CD8-positive, alpha-beta T cell (primary cell): ENCODE measurements at regions of chr4 and their contacts with region 1.

Region 1: GRCh38 chr4:143513306-143514168 is at the start of gene SMARCA5:
- DNase-seq: peak; percentile 88 to 100 (median 93)
- ATAC-seq: peak; percentile 86
- H3K4me3 ChIP-seq: peak within 1 kb of the TSS; percentile 68 to 88
- H3K4me3 Mint-ChIP-seq: peak within 1 kb of the TSS; percentile 99
- H3K27ac ChIP-seq: peak within 1 kb of the TSS; percentile 96 to 99
- H3K27ac Mint-ChIP-seq: peak within 1 kb of the TSS; percentile 100
- H3K4me1 ChIP-seq: peaks cover 38% of the 10 kb centered on the region
- H3K4me1 Mint-ChIP-seq: peaks cover 42% of the 10 kb centered on the region
- H3K27me3 ChIP-seq: no peaks in the 10 kb centered on the region
- H3K27me3 Mint-ChIP-seq: no peaks in the 10 kb centered on the region
- CTCF ChIP-seq: no peak
- total RNA-seq, gene SMARCA5: 57.9 to 63.1 TPM

Region 2: DNA sequence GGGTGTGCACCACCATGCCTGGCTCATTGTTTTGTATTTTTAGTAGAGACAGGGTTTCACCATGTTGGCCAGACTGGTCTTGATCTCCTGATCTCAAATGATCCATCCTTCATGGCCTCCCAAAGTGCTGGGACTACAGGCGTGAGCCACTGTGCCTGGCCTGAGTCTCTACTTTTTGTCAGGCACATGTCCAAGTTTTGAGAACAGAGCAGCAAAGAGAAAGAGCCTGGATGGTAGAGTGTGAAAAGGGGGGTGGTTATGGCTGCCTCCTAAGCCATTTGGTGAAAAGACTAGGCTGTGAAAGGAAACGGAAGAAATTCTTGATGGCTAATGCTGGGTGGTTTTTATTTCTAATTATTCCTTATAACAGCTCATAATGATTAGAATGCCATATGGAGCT is 113.5 kb before region 1 on chr4:
- CTCF ChIA-PET with region 1: no interaction called
- POLR2A ChIA-PET with region 1: no interaction called
- intact Hi-C with region 1: loop called in 1 of 2 experiments (anchors 1 kb)
- DNase-seq: no peak
- ATAC-seq: no peak
- H3K4me3 ChIP-seq: no peak overlapping the region
- H3K4me3 Mint-ChIP-seq: no peak overlapping the region
- H3K27ac ChIP-seq: no peak overlapping the region
- H3K27ac Mint-ChIP-seq: no peak overlapping the region
- H3K4me1 ChIP-seq: no peaks in the 10 kb centered on the region
- H3K4me1 Mint-ChIP-seq: peaks cover 11% of the 10 kb centered on the region
- H3K27me3 ChIP-seq: no peaks in the 10 kb centered on the region
- H3K27me3 Mint-ChIP-seq: peaks cover 8% of the 10 kb centered on the region
- CTCF ChIP-seq: no peak

Region 3: GRCh38 chr4:143531380-143531779 is 17.8 kb after region 1 on chr4:
- CTCF ChIA-PET with region 1: no interaction called
- POLR2A ChIA-PET with region 1: interaction called, 5 read pairs
- intact Hi-C with region 1: loop called in 1 of 2 experiments (anchors 2 kb)
- DNase-seq: peak in 1 of 9 experiments; percentile 12
- ATAC-seq: no peak
- H3K4me3 ChIP-seq: no peak overlapping the region
- H3K4me3 Mint-ChIP-seq: no peak overlapping the region
- H3K27ac ChIP-seq: no peak overlapping the region
- H3K27ac Mint-ChIP-seq: no peak overlapping the region
- H3K4me1 ChIP-seq: no peaks in the 10 kb centered on the region
- H3K4me1 Mint-ChIP-seq: peaks cover 12% of the 10 kb centered on the region
- H3K27me3 ChIP-seq: no peaks in the 10 kb centered on the region
- H3K27me3 Mint-ChIP-seq: no peaks in the 10 kb centered on the region
- CTCF ChIP-seq: peak; percentile 15

Region 4: GRCh38 chr4:143587703-143588102 is 74.2 kb after region 1 on chr4:
- CTCF ChIA-PET with region 1: no interaction called
- POLR2A ChIA-PET with region 1: no interaction called
- intact Hi-C with region 1: no loop called
- DNase-seq: no peak
- ATAC-seq: no peak
- H3K4me3 ChIP-seq: no peak overlapping the region
- H3K4me3 Mint-ChIP-seq: no peak overlapping the region
- H3K27ac ChIP-seq: no peak overlapping the region
- H3K27ac Mint-ChIP-seq: no peak overlapping the region
- H3K4me1 ChIP-seq: no peaks in the 10 kb centered on the region
- H3K4me1 Mint-ChIP-seq: no peaks in the 10 kb centered on the region
- H3K27me3 ChIP-seq: no peaks in the 10 kb centered on the region
- H3K27me3 Mint-ChIP-seq: peaks cover 2% of the 10 kb centered on the region
- CTCF ChIP-seq: no peak

Region 5: DNA sequence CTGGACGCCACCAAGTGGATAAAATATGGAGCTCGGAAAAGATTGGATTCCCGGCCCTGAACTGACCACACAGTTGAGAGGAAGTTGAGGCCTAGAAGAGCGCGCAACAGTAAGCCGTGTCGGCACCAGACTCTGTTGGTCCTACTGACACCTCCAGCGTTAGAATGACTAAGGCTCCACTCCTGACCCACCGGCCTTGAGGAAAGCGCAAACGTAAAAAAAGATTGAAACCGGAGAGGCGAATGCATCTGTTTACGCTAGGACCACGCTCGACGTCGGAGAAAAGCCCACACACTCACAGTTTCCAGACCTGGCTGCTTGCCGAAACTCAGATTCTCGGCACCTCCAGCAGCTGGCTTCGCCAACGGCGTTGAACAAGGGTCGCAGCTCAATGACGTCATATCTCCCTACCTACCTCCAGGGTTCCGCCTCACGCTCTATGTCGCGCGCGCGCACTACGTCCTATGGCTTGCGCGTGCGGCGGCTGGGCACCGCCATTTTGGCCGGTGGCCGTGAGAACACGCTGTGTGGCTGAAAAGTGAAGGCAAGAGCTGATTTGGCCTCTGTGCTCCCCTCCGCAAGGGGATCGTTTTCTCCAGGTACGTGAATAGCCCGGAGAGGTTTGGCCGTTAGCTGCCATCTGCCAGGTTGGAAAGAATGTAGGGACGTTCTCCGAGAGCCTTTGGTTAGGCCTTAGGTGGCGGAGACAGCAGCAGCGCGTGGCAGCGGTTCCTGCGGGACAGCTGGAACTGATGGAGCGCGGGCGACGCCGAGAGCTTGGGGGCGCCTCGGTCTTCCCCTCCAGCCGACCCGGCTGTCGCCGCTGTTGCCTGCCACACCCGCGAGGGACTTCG is 1584.5 kb after region 1 on chr4 and contains the starts of genes ABCE1 and ANAPC10:
- CTCF ChIA-PET with region 1: no interaction called
- POLR2A ChIA-PET with region 1: interaction called, 5 read pairs
- intact Hi-C with region 1: loop called (anchors 1 to 5 kb)
- DNase-seq: peak; percentile 84 to 99 (median 97)
- ATAC-seq: peak; percentile 89
- H3K4me3 ChIP-seq: peak within 1 kb of the TSS; percentile 70 to 81
- H3K4me3 Mint-ChIP-seq: peak within 1 kb of the TSS; percentile 95
- H3K27ac ChIP-seq: peak within 1 kb of the TSS; percentile 88 to 91
- H3K27ac Mint-ChIP-seq: peak within 1 kb of the TSS; percentile 98
- H3K4me1 ChIP-seq: peaks cover 41% of the 10 kb centered on the region
- H3K4me1 Mint-ChIP-seq: peaks cover 46% of the 10 kb centered on the region
- H3K27me3 ChIP-seq: no peaks in the 10 kb centered on the region
- H3K27me3 Mint-ChIP-seq: no peaks in the 10 kb centered on the region
- CTCF ChIP-seq: no peak
- total RNA-seq, gene ABCE1: 68.8 to 70.9 TPM
- total RNA-seq, gene ANAPC10: 24.5 to 26.7 TPM